ENCODE measurements at regions of chr13 and their contacts with region 1.

Region 1: DNA sequence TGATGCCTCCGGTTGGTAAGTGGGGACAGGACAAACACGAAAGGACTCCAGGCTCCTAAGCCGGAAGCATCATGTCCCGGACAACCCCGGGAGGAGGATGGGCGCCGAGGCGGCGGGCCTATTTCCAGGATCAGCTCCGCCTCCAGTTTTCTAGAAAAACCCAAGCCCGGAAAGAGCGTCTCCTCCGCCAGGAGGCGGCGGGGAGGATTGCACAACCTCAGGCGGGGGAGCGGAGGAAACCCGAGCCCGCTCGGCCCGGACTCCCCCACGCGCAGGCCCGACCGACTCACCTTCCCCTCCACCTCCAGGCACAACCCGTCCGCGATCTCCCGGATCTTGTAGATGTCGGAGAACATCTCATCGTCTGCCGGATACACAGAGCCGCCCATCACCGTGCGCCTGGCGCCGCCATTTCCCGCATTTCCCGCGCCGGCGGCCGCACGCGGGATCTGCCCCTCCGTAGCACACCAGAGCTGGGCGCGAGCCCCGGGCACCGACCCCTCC is 509 bp downstream of the TPT1 start:
- DNase-seq: peak; percentile 86
- ATAC-seq: peak; percentile 51
- H3K4me3 Mint-ChIP-seq: peak overlapping the region; percentile 98
- H3K27ac Mint-ChIP-seq: peak overlapping the region; percentile 100
- H3K4me1 Mint-ChIP-seq: peaks cover 52% of the 10 kb centered on the region
- H3K27me3 Mint-ChIP-seq: no peaks in the 10 kb centered on the region

Region 2: DNA sequence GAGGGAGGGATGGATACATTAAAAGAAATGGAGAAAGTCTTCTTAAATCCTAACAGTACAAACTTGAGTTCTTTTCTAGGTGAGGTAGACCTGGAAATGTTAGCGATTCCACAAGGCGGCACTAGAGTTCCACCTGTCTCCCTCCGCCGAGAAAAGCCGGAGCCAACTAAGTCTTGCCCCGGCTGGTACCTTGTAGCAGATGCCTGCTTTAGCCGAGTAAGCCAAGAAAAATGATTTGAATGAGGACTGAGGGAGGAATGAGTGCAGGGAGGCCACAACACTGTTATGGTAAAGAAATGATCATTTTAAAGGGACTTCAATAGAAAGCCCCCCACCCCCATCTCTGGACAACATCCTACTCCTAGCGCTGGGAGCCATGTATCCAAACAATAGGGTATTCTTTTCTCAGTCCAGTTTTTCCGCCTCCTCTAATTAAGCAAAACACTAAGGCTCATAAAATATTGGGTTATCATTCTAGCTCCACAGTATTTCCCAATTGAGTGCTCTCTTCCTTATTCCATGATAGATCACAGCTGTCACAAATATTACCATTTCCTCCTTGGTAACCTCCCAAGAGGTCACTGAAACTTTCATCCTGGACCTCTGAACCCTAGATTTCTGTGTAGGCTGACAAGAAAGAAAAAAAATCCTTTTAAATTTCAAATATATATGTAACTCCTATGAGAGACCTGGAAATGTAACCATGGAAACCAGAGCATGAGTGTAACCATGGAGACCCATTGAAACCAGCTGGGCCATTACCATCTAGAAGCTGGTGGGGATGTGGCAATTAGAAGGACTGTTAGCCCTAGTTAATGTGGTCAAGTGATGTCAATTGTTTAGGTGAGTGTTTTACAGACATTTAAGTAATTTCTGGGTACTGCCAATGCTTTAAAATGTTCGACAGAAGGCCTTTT is 292.8 kb before region 1 on chr13:
- CTCF ChIA-PET with region 1: interaction called, 13 read pairs
- POLR2A ChIA-PET with region 1: no interaction called
- DNase-seq: peak; percentile 86
- ATAC-seq: peak; percentile 93
- H3K4me3 Mint-ChIP-seq: peak overlapping the region; percentile 73
- H3K27ac Mint-ChIP-seq: no peak overlapping the region
- H3K4me1 Mint-ChIP-seq: peaks cover 15% of the 10 kb centered on the region
- H3K27me3 Mint-ChIP-seq: peaks cover 23% of the 10 kb centered on the region

Region 3: GRCh38 chr13:45092663-45093062 is 247.8 kb before region 1 on chr13:
- CTCF ChIA-PET with region 1: no interaction called
- POLR2A ChIA-PET with region 1: no interaction called
- DNase-seq: no peak
- ATAC-seq: no peak
- H3K4me3 Mint-ChIP-seq: no peak overlapping the region
- H3K27ac Mint-ChIP-seq: no peak overlapping the region
- H3K4me1 Mint-ChIP-seq: peaks cover 3% of the 10 kb centered on the region
- H3K27me3 Mint-ChIP-seq: peaks cover 4% of the 10 kb centered on the region

Region 4: DNA sequence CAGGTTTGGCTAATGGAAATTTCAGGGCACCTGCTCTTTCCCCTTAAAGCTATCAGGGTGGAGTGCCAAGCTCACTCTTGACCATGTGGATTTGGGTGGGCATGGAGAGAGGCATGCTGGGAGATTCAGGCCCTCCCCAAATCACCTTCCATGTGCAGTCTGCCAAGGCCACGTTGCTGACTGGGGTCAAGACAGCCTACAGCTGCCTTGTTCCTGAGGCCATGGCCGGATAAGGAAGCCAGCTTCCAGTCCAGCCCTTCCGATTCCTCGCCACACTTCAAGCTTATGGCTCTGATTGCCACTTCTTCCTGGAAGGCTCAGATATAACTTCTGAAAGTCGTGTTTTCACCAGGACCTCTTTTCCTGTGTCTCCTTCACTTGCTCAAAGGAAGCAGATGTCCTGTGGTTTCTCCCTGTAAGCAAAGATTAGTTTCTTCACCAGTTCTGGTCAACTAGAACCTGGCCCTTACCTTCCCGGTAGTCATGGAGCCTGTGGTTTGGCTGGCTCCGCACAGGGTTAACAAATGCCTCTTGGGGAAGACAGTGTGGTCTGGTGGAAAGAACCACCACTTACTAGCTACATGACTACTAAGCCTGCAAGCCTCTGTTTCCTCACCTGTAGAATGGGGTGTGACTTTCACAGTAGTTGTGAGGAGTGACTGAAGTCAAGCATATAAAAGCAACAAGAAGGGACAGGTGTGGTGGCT is 16.6 kb after region 1 on chr13:
- CTCF ChIA-PET with region 1: interaction called, 8 read pairs
- POLR2A ChIA-PET with region 1: interaction called, 14 read pairs
- DNase-seq: peak; percentile 47
- ATAC-seq: peak; percentile 70
- H3K4me3 Mint-ChIP-seq: peak overlapping the region; percentile 10
- H3K27ac Mint-ChIP-seq: peak overlapping the region; percentile 89
- H3K4me1 Mint-ChIP-seq: peaks cover 44% of the 10 kb centered on the region
- H3K27me3 Mint-ChIP-seq: no peaks in the 10 kb centered on the region

Region 5: GRCh38 chr13:45393941-45394570 is 53.6 kb after region 1 on chr13:
- CTCF ChIA-PET with region 1: interaction called, 6 read pairs
- POLR2A ChIA-PET with region 1: interaction called, 12 read pairs
- DNase-seq: peak; percentile 58
- ATAC-seq: no peak
- H3K4me3 Mint-ChIP-seq: no peak overlapping the region
- H3K27ac Mint-ChIP-seq: peak overlapping the region; percentile 24
- H3K4me1 Mint-ChIP-seq: peaks cover 46% of the 10 kb centered on the region
- H3K27me3 Mint-ChIP-seq: no peaks in the 10 kb centered on the region

Region 6: DNA sequence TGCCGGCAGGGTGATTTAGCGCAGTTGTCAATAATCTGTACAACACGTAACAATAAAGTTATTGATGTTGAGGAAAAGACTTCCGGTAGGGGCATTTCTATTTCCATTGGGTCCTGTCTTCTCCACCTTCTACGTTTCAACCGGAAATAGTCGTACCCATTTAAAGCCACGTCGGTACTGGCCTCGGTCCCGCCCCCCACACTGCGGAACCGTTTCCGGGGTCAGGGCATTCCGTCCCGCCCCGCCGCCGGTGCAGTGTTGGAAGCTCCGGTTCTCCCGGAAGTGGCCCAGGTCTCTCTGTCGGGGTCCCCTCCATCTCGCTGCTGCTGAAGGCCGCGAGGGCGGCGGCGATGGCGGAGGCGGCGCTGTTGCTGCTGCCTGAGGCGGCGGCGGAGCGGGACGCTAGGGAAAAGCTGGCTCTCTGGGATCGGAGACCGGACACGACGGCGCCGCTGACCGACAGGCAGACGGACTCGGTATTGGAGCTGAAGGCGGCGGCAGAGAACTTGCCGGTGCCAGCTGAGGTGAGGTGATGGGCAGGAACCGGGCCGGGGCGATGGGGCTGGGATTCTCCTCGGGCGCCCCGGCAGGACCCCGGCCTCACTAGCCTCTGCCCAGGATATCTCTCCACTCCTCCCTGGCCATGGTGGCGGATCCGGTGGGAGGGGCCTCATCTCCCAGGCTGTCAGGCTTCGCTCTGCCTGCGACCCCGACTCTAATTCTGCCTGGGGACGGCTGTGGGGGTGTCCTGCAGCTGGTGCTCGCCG is 124.4 kb after region 1 on chr13 and contains the start of gene COG3:
- CTCF ChIA-PET with region 1: no interaction called
- POLR2A ChIA-PET with region 1: interaction called, 11 read pairs
- DNase-seq: peak; percentile 96
- ATAC-seq: peak; percentile 96
- H3K4me3 Mint-ChIP-seq: peak within 1 kb of the TSS; percentile 81
- H3K27ac Mint-ChIP-seq: peak within 1 kb of the TSS; percentile 90
- H3K4me1 Mint-ChIP-seq: peaks cover 38% of the 10 kb centered on the region
- H3K27me3 Mint-ChIP-seq: no peaks in the 10 kb centered on the region
- total RNA-seq, gene COG3: 22.0 to 23.1 TPM

Measured in activated CD8-positive, alpha-beta T cell treated with anti-CD3 and anti-CD28 coated beads, Interleukin-2, amount 10 ng/mL, durations not matched to agents 7 days and 5 days (primary cell).